ENCODE measurements at regions of chr7 and their contacts with region 1.

Region 1: DNA sequence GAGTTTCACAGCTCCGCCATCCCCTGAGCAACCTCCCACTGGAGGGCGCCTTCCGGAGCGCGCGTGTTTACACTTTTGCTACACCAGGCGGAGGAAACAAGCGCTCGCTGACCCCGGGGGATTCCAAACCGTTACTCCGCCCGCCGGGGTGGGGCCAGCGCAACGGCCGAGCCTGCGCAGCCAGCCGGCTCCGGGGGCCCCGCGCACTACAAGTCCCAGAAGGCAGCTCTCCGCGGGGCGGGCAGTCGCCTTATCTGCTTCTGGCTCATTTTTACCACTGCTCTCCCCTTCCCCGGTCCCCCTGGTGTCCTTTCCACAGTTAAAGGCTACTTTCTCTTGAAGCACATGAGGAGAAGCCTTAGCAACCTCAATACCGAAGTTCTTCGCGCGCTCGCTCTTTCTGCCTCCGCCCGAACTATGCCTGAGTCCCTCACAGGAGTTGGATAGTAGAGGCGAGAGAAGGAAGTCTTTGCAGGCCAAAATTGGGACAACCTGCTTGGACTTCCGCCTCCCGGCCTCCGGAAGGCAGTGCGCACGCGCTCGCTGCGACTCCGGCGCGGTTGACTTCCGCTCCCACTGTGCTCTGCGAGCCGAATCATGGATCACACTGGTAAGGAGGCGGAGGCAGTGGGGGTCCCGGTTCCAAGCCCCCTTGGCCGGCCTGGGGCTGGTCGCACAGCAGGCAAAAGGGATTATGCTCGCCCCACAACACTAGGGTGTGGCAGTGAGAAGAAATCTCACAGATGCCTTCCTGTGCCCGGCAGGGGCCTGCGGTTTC is at the start of gene CBLL1:
- DNase-seq: peak; percentile 99
- ATAC-seq: peak; percentile 94
- H3K4me3 Mint-ChIP-seq: peak within 1 kb of the TSS; percentile 87
- H3K27ac Mint-ChIP-seq: peak within 1 kb of the TSS; percentile 100
- H3K4me1 Mint-ChIP-seq: peaks cover 40% of the 10 kb centered on the region
- H3K27me3 Mint-ChIP-seq: no peaks in the 10 kb centered on the region
- CTCF ChIP-seq: peak; percentile 69
- total RNA-seq, gene CBLL1: 31.7 to 38.2 TPM

Region 2: DNA sequence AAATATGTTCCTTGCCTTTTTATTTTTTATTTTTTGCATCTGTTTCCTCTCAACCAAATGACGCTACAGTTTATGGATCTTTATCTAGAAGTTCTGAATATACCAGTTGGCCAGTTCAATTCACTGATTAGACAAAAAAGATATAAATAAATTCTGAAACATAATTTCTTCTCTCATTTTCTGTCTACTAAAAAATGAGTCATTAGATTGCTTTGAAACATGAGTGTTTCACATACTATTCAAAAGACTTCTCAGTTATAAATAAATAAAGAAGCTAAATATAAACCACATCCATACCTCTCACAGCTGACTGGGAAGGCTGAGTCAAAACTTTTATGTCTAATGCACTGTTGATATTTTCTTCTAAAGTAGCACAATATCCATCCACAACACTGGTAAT is 371.5 kb before region 1 on chr7:
- CTCF ChIA-PET with region 1: no interaction called
- POLR2A ChIA-PET with region 1: no interaction called
- intact Hi-C with region 1: no loop called
- DNase-seq: no peak
- ATAC-seq: no peak
- H3K4me3 Mint-ChIP-seq: no peak overlapping the region
- H3K27ac Mint-ChIP-seq: no peak overlapping the region
- H3K4me1 Mint-ChIP-seq: no peaks in the 10 kb centered on the region
- H3K27me3 Mint-ChIP-seq: no peaks in the 10 kb centered on the region
- CTCF ChIP-seq: no peak

Region 3: GRCh38 chr7:107588529-107589130 is 155.1 kb before region 1 on chr7:
- CTCF ChIA-PET with region 1: no interaction called
- POLR2A ChIA-PET with region 1: no interaction called
- intact Hi-C with region 1: no loop called
- DNase-seq: no peak
- ATAC-seq: no peak
- H3K4me3 Mint-ChIP-seq: no peak overlapping the region
- H3K27ac Mint-ChIP-seq: no peak overlapping the region
- H3K4me1 Mint-ChIP-seq: no peaks in the 10 kb centered on the region
- H3K27me3 Mint-ChIP-seq: no peaks in the 10 kb centered on the region
- CTCF ChIP-seq: no peak

Region 4: GRCh38 chr7:107816011-107816566 is 72.3 kb after region 1 on chr7:
- CTCF ChIA-PET with region 1: no interaction called
- POLR2A ChIA-PET with region 1: no interaction called
- intact Hi-C with region 1: no loop called
- DNase-seq: no peak
- ATAC-seq: no peak
- H3K4me3 Mint-ChIP-seq: no peak overlapping the region
- H3K27ac Mint-ChIP-seq: peak overlapping the region; percentile 86
- H3K4me1 Mint-ChIP-seq: peaks cover 28% of the 10 kb centered on the region
- H3K27me3 Mint-ChIP-seq: no peaks in the 10 kb centered on the region
- CTCF ChIP-seq: no peak

Region 5: GRCh38 chr7:107890962-107891635 is 147.3 kb after region 1 on chr7 and contains the start of gene DLD:
- CTCF ChIA-PET with region 1: interaction called, 10 read pairs
- POLR2A ChIA-PET with region 1: interaction called, 15 read pairs
- intact Hi-C with region 1: no loop called
- DNase-seq: peak; percentile 96
- ATAC-seq: peak; percentile 98
- H3K4me3 Mint-ChIP-seq: peak within 1 kb of the TSS; percentile 87
- H3K27ac Mint-ChIP-seq: peak within 1 kb of the TSS; percentile 97
- H3K4me1 Mint-ChIP-seq: peaks cover 36% of the 10 kb centered on the region
- H3K27me3 Mint-ChIP-seq: no peaks in the 10 kb centered on the region
- CTCF ChIP-seq: no peak
- total RNA-seq, gene DLD: 99.8 to 102 TPM

Measured in activated CD8-positive, alpha-beta T cell treated with anti-CD3 and anti-CD28 coated beads for 36 hours (primary cell).